Posterior vena cava (tissue), 2 donors: ENCODE measurements at regions of chr5 and their contacts with region 1.

Region 1: GRCh38 chr5:78666041-78666444 is 17.5 kb upstream of the LHFPL2 start:
- DNase-seq: no peak

Region 2: GRCh38 chr5:77168161-77168875 is 1497.7 kb before region 1 on chr5:
- intact Hi-C with region 1: loop called in 1 of 2 experiments (anchors 5 kb)
- DNase-seq: peak; percentile 84

Region 3: DNA sequence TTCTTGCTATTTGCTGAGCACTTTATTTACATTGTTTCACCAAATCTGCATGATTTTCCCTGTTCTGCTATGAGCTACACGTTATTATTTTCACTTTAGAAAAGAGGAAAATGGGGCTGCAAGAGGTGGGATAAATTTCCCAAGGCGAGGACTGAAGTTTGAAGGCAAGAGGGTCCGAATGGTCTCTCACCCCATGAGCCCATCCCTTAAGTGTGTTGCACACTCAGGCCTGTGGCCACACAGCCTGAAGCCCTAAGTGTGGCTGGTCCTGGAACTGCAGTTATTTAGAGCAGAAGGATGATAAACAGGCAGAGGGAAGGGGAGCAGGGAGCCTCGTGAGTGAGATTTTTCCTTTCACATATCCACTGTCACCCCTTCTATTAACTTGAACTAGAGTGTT is 1447.8 kb before region 1 on chr5:
- intact Hi-C with region 1: no loop called
- DNase-seq: no peak